ENCODE measurements at regions of chr9 and their contacts with region 1.

Region 1: GRCh38 chr9:132721661-132722060 is 51.4 kb downstream of the GTF3C4 start:
- DNase-seq: no peak
- H3K4me3 ChIP-seq: no peak overlapping the region
- H3K27ac ChIP-seq: no peak overlapping the region
- H3K4me1 ChIP-seq: no peaks in the 10 kb centered on the region
- H3K27me3 ChIP-seq: peaks cover 0 to 7% of the 10 kb centered on the region in 2 donors
- CTCF ChIP-seq: no peak
- POLR2A ChIP-seq: no peak

Region 2: GRCh38 chr9:132677976-132678375 is 43.7 kb before region 1 on chr9:
- intact Hi-C with region 1: loop called (anchors 2 kb)
- DNase-seq: no peak
- H3K4me3 ChIP-seq: no peak overlapping the region
- H3K27ac ChIP-seq: no peak overlapping the region
- H3K4me1 ChIP-seq: no peaks in the 10 kb centered on the region
- H3K27me3 ChIP-seq: no peaks in the 10 kb centered on the region
- CTCF ChIP-seq: no peak
- POLR2A ChIP-seq: no peak